Naive thymus-derived CD4-positive, alpha-beta T cell (primary cell): ENCODE measurements at regions of chr1 and their contacts with region 1.

Region 1: GRCh38 chr1:109643385-109644230 is 12.3 kb upstream of the GSTM4 start:
- DNase-seq: peak; percentile 65 to 91 (median 79)
- ATAC-seq: peak; percentile 94
- H3K4me3 ChIP-seq: no peak overlapping the region
- H3K4me3 Mint-ChIP-seq: no peak overlapping the region
- H3K27ac ChIP-seq: no peak overlapping the region
- H3K27ac Mint-ChIP-seq: peak overlapping the region in 3 of 9 donors; percentile 22 to 81 (median 38)
- H3K4me1 ChIP-seq: peaks cover 6 to 7% of the 10 kb centered on the region in 2 donors
- H3K4me1 Mint-ChIP-seq: peaks cover 3 to 15% (median 5%) of the 10 kb centered on the region in 7 donors
- H3K27me3 ChIP-seq: no peaks in the 10 kb centered on the region
- H3K27me3 Mint-ChIP-seq: peaks cover 0 to 7% (median 0%) of the 10 kb centered on the region in 5 donors

Region 2: DNA sequence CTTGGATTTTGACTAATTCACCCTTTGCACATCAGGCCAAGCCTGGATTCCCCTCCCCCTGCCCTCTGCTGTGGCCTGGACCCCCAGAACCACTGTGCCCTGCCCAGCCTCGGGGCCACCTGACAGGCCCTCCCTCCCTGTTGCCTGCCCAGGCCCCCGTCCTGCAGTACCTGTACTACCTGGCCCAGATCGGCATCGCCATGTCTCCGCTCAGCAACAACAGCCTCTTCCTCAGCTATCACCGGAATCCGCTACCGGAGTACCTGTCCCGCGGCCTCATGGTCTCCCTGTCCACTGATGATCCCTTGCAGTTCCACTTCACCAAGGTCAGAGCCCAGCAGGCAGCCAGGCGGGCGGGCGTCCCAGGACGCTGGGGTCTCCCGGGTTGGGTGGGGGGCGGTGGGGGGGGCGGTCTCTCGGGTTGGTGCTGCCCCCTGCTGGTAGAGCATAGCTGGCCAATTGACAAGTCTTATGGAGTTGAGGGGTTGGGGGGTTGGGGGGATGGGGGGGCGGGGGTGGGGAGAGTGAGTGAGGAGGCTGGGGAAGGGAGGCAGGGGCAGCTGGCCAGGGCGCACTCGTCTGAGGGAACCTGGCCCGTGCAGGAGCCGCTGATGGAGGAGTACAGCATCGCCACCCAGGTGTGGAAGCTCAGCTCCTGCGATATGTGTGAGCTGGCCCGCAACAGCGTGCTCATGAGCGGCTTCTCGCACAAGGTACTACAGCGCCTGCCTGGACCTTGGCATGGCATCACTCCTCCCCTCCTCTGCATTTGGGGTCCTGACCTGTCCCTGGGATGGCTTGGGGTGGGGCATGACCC is 13.3 kb before region 1 on chr1:
- CTCF ChIA-PET with region 1: interaction called, 14 read pairs
- POLR2A ChIA-PET with region 1: no interaction called
- intact Hi-C with region 1: no loop called
- DNase-seq: peak in 5 of 9 donors; percentile 21 to 51 (median 35)
- ATAC-seq: peak; percentile 26
- H3K4me3 ChIP-seq: no peak overlapping the region
- H3K4me3 Mint-ChIP-seq: no peak overlapping the region
- H3K27ac ChIP-seq: no peak overlapping the region
- H3K27ac Mint-ChIP-seq: peak overlapping the region in 3 of 9 donors; percentile 33 to 38 (median 34)
- H3K4me1 ChIP-seq: peaks cover 0 to 10% of the 10 kb centered on the region in 2 donors
- H3K4me1 Mint-ChIP-seq: peaks cover 6 to 22% (median 15%) of the 10 kb centered on the region in 7 donors
- H3K27me3 ChIP-seq: no peaks in the 10 kb centered on the region
- H3K27me3 Mint-ChIP-seq: no peaks in the 10 kb centered on the region

Region 3: GRCh38 chr1:109667452-109668122 is 24.0 kb after region 1 on chr1 and contains the start of gene GSTM2:
- CTCF ChIA-PET with region 1: interaction called, 4 read pairs
- POLR2A ChIA-PET with region 1: no interaction called
- intact Hi-C with region 1: loop called in 1 of 2 experiments (anchors 1 kb)
- DNase-seq: peak; percentile 49 to 87 (median 82)
- ATAC-seq: peak; percentile 100
- H3K4me3 ChIP-seq: peak within 1 kb of the TSS; percentile 52
- H3K4me3 Mint-ChIP-seq: peak within 1 kb of the TSS; percentile 75 to 92 (median 84)
- H3K27ac ChIP-seq: peak within 1 kb of the TSS; percentile 49
- H3K27ac Mint-ChIP-seq: peak within 1 kb of the TSS; percentile 38 to 90 (median 77)
- H3K4me1 ChIP-seq: peaks cover 0 to 11% of the 10 kb centered on the region in 2 donors
- H3K4me1 Mint-ChIP-seq: peaks cover 17 to 30% (median 24%) of the 10 kb centered on the region in 7 donors
- H3K27me3 ChIP-seq: no peaks in the 10 kb centered on the region
- H3K27me3 Mint-ChIP-seq: no peaks in the 10 kb centered on the region
- total RNA-seq, gene GSTM2: 52.2 to 201 (median 109) TPM

Region 4: GRCh38 chr1:109704173-109704572 is 60.6 kb after region 1 on chr1:
- CTCF ChIA-PET with region 1: no interaction called
- POLR2A ChIA-PET with region 1: no interaction called
- intact Hi-C with region 1: loop called in 1 of 2 experiments (anchors 5 kb)
- DNase-seq: no peak
- ATAC-seq: no peak
- H3K4me3 ChIP-seq: no peak overlapping the region
- H3K4me3 Mint-ChIP-seq: no peak overlapping the region
- H3K27ac ChIP-seq: no peak overlapping the region
- H3K27ac Mint-ChIP-seq: no peak overlapping the region
- H3K4me1 ChIP-seq: no peaks in the 10 kb centered on the region
- H3K4me1 Mint-ChIP-seq: peaks cover 0 to 1% (median 0%) of the 10 kb centered on the region in 7 donors
- H3K27me3 ChIP-seq: no peaks in the 10 kb centered on the region
- H3K27me3 Mint-ChIP-seq: peaks cover 0 to 12% (median 0%) of the 10 kb centered on the region in 5 donors

Region 5: GRCh38 chr1:109910123-109910962 is 266.7 kb after region 1 on chr1 and contains the start of gene CSF1:
- CTCF ChIA-PET with region 1: no interaction called
- POLR2A ChIA-PET with region 1: no interaction called
- intact Hi-C with region 1: loop called in 1 of 2 experiments (anchors 5 kb)
- DNase-seq: peak; percentile 15 to 72 (median 35)
- ATAC-seq: peak; percentile 71
- H3K4me3 ChIP-seq: peak within 1 kb of the TSS; percentile 65
- H3K4me3 Mint-ChIP-seq: peak within 1 kb of the TSS; percentile 78 to 98 (median 88)
- H3K27ac ChIP-seq: peak within 1 kb of the TSS; percentile 43
- H3K27ac Mint-ChIP-seq: peak within 1 kb of the TSS; percentile 38 to 97 (median 73)
- H3K4me1 ChIP-seq: peaks cover 36 to 43% of the 10 kb centered on the region in 2 donors
- H3K4me1 Mint-ChIP-seq: peaks cover 43 to 83% (median 64%) of the 10 kb centered on the region in 7 donors
- H3K27me3 ChIP-seq: no peaks in the 10 kb centered on the region
- H3K27me3 Mint-ChIP-seq: peaks cover 0 to 18% (median 0%) of the 10 kb centered on the region in 5 donors
- total RNA-seq, gene CSF1: 1.4 to 125 (median 5.9) TPM

Region 6: DNA sequence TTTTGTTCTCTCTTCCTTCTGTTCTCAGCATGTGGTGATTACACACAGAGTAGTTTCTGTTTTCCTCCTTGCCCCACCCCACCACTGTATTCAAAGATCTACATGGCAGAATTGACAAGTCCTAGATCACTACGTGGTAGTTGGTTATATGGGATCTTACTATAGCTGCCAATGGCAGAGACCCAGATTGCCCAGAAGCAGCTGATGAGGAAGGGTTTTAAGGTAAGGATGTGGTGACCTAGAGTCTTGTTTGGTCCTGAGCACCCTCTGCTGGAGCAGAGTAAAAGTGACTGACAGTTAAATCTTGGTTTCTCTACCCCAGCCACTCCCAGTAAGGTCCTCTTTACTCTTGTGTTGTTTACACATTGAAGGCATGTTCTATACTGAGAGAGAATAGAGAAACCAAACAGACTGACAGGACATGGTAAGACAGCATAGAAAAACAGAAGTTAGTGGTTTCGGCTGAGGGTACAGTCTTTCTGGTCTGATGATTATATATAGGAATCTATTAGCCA is 368.0 kb after region 1 on chr1:
- CTCF ChIA-PET with region 1: interaction called, 3 read pairs
- POLR2A ChIA-PET with region 1: no interaction called
- intact Hi-C with region 1: loop called (anchors 1 kb)
- DNase-seq: peak in 6 of 9 donors; percentile 19 to 49 (median 38)
- ATAC-seq: peak; percentile 96
- H3K4me3 ChIP-seq: no peak overlapping the region
- H3K4me3 Mint-ChIP-seq: no peak overlapping the region
- H3K27ac ChIP-seq: no peak overlapping the region
- H3K27ac Mint-ChIP-seq: peak overlapping the region in 3 of 9 donors; percentile 17 to 73 (median 56)
- H3K4me1 ChIP-seq: no peaks in the 10 kb centered on the region
- H3K4me1 Mint-ChIP-seq: peaks cover 2 to 13% (median 4%) of the 10 kb centered on the region in 7 donors
- H3K27me3 ChIP-seq: no peaks in the 10 kb centered on the region
- H3K27me3 Mint-ChIP-seq: no peaks in the 10 kb centered on the region